Activated naive CD4-positive, alpha-beta T cell treated with anti-CD3 and anti-CD28 coated beads for 36 hours (primary cell): ENCODE measurements at regions of chr13 and their contacts with region 1.

Region 1: DNA sequence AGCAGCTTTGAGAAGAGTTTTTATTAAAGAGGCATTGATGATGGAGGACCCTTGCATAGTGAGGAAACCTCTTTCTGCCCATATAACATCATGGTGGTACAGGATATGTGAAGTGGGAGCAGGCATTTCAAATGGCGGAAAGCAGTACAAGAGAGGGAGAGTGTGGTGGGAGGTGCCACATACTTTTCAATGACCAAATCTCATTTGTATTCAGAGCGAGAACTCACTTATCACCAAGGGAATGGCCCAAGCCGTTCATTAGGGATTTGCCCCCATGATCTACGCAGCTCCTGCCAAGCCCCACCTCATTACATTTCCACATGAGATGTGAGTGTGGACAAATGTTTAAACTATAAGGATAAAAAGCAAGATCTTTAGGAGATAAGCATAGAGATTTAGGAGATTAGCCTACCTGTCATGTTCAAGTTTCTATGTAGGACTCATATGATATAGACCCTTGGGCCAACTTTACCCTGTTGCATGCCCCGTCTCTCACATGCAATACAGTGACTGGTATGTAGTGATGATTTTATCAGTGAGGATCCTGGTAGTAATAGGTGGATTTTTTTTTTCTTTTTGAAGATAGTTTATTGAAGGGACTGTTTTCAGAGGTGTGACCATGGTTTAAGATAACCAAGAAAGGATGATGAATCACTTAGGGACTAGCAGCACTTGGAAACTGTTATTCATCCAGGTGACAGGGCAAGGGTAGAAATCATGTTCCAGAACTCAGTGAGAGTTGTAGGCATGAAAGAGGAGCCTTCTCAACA is 38.3 kb downstream of the DNAJC15 start:
- DNase-seq: peak; percentile 57
- H3K4me3 Mint-ChIP-seq: no peak overlapping the region
- H3K27ac Mint-ChIP-seq: peak overlapping the region; percentile 67
- H3K4me1 Mint-ChIP-seq: peaks cover 59% of the 10 kb centered on the region
- H3K27me3 Mint-ChIP-seq: no peaks in the 10 kb centered on the region

Region 2: GRCh38 chr13:43023289-43023951 is 38.3 kb before region 1 on chr13 and contains the start of gene DNAJC15:
- CTCF ChIA-PET with region 1: interaction called, 3 read pairs
- intact Hi-C with region 1: loop called (anchors 1 kb)
- DNase-seq: peak; percentile 88
- H3K4me3 Mint-ChIP-seq: peak within 1 kb of the TSS; percentile 98
- H3K27ac Mint-ChIP-seq: peak within 1 kb of the TSS; percentile 94
- H3K4me1 Mint-ChIP-seq: peaks cover 30% of the 10 kb centered on the region
- H3K27me3 Mint-ChIP-seq: no peaks in the 10 kb centered on the region
- total RNA-seq, gene DNAJC15: 14.5 to 16.8 TPM

Region 3: GRCh38 chr13:43041369-43041921 is 20.2 kb before region 1 on chr13:
- CTCF ChIA-PET with region 1: interaction called, 4 read pairs
- intact Hi-C with region 1: loop called (anchors 1 kb)
- DNase-seq: no peak
- H3K4me3 Mint-ChIP-seq: no peak overlapping the region
- H3K27ac Mint-ChIP-seq: no peak overlapping the region
- H3K4me1 Mint-ChIP-seq: peaks cover 64% of the 10 kb centered on the region
- H3K27me3 Mint-ChIP-seq: no peaks in the 10 kb centered on the region

Region 4: GRCh38 chr13:43074824-43075510 is 13.3 kb after region 1 on chr13:
- CTCF ChIA-PET with region 1: no interaction called
- intact Hi-C with region 1: loop called (anchors 2 kb)
- DNase-seq: peak; percentile 22
- H3K4me3 Mint-ChIP-seq: no peak overlapping the region
- H3K27ac Mint-ChIP-seq: no peak overlapping the region
- H3K4me1 Mint-ChIP-seq: peaks cover 41% of the 10 kb centered on the region
- H3K27me3 Mint-ChIP-seq: no peaks in the 10 kb centered on the region

Region 5: GRCh38 chr13:43094901-43095300 is 33.2 kb after region 1 on chr13:
- CTCF ChIA-PET with region 1: no interaction called
- intact Hi-C with region 1: loop called (anchors 1 kb)
- DNase-seq: no peak
- H3K4me3 Mint-ChIP-seq: no peak overlapping the region
- H3K27ac Mint-ChIP-seq: peak overlapping the region; percentile 62
- H3K4me1 Mint-ChIP-seq: peaks cover 22% of the 10 kb centered on the region
- H3K27me3 Mint-ChIP-seq: no peaks in the 10 kb centered on the region

Region 6: GRCh38 chr13:43150369-43151207 is 88.9 kb after region 1 on chr13:
- CTCF ChIA-PET with region 1: no interaction called
- intact Hi-C with region 1: no loop called
- DNase-seq: no peak
- H3K4me3 Mint-ChIP-seq: no peak overlapping the region
- H3K27ac Mint-ChIP-seq: no peak overlapping the region
- H3K4me1 Mint-ChIP-seq: no peaks in the 10 kb centered on the region
- H3K27me3 Mint-ChIP-seq: peaks cover 9% of the 10 kb centered on the region

Region 7: DNA sequence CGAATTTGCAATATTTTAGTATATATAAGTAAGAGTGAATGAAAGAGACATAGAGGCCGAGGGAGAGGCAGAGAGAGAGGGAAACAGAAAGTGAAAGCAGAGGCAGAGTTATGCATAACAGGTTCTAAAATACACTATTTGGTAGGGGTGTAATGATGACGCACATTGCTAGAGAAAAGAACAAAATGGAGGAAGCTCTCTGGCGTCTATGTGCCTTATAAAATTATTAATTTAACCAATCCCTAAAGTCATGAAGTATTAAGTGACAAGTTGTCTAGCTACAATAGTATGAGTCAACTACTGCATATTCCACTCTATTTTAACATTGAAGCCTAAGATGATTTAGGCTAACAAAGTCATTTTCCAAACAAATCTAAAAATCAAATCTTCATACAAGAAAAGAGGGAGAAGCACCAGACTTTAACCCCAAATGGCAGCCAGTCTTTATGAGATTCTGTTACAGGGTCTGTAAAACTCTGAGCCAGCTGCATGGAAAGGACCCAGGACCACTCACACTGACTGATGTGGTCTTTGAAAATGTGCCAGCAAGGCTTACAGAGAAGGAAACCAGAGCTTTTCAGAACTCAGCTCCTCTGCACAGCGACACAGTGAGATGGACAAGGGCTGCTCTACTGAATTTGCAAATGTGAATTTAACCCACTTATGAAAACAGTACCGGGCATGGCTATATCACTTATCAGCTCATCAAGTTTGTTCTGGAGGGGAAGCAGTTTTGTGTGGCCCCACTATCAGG is 1212.9 kb after region 1 on chr13:
- CTCF ChIA-PET with region 1: no interaction called
- intact Hi-C with region 1: loop called (anchors 10 kb)
- DNase-seq: peak; percentile 27
- H3K4me3 Mint-ChIP-seq: peak overlapping the region; percentile 70
- H3K27ac Mint-ChIP-seq: peak overlapping the region; percentile 89
- H3K4me1 Mint-ChIP-seq: peaks cover 65% of the 10 kb centered on the region
- H3K27me3 Mint-ChIP-seq: no peaks in the 10 kb centered on the region